Right ventricle myocardium superior (tissue), 1 donor: ENCODE measurements at regions of chr19 and their contacts with region 1.

Region 1: DNA sequence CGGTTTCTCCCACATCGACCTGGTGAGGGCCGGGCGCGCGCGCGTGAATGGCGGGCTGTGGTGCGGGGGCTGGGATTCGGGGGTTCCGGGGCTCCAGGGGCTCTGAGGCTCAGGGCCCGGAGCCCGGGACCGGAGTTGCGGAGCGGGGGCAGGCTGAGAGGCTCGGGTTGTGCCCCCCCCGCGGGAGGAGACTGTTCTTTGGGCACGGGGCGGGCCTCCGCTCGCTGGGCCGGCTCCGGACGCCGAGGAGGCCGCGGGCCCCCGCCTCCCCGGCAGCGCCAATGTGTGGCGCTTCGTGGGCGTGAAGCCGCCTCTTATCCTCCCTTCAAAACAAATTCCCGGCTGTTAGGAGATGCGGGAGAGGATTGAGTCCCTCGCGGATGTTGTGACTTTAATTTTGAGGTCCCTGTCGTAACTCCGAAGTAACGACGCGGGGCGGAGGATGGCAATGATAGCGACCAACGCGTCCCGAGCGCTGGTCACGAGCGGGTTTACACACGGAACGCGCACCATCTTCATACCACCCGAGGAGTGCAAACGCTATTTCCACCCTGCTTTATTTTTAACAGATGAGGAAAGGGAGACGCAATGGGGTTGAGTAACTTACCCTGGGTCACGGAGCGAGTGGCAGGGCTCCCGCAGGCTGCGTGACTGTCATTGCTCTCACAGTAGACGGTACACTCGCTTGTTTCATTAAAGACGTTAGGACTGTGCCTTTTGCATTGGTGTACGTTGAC is 536 bp downstream of the UBA2 start:
- DNase-seq: peak; percentile 41
- ATAC-seq: peak; percentile 79

Region 2: GRCh38 chr19:34393629-34394028 is 35.1 kb before region 1 on chr19:
- intact Hi-C with region 1: no loop called
- DNase-seq: no peak
- ATAC-seq: no peak

Region 3: GRCh38 chr19:34501339-34502320 is 72.9 kb after region 1 on chr19:
- intact Hi-C with region 1: loop called (anchors 5 kb)
- DNase-seq: peak; percentile 96
- ATAC-seq: peak; percentile 90